OCI-LY7 (cell line): ENCODE measurements at regions of chr9 and their contacts with region 1.

Region 1: GRCh38 chr9:104682642-104683041 is 11.7 kb upstream of the OR13D1 start:
- DNase-seq: peak; percentile 62
- H3K4me3 ChIP-seq: no peak overlapping the region
- H3K27ac ChIP-seq: no peak overlapping the region
- H3K4me1 ChIP-seq: peaks cover 4% of the 10 kb centered on the region
- CTCF ChIP-seq: peak; percentile 82

Region 2: GRCh38 chr9:104177003-104177611 is 505.5 kb before region 1 on chr9:
- CTCF ChIA-PET with region 1: no interaction called
- POLR2A ChIA-PET with region 1: no interaction called
- intact Hi-C with region 1: loop called (anchors 5 kb)
- DNase-seq: peak; percentile 23
- H3K4me3 ChIP-seq: no peak overlapping the region
- H3K27ac ChIP-seq: no peak overlapping the region
- H3K4me1 ChIP-seq: no peaks in the 10 kb centered on the region
- CTCF ChIP-seq: peak; percentile 81

Region 3: GRCh38 chr9:104633976-104634520 is 48.6 kb before region 1 on chr9:
- CTCF ChIA-PET with region 1: no interaction called
- POLR2A ChIA-PET with region 1: no interaction called
- intact Hi-C with region 1: no loop called
- DNase-seq: no peak
- H3K4me3 ChIP-seq: no peak overlapping the region
- H3K27ac ChIP-seq: no peak overlapping the region
- H3K4me1 ChIP-seq: no peaks in the 10 kb centered on the region
- CTCF ChIP-seq: no peak